K562 (cell line): ENCODE measurements at regions of chr20 and their contacts with region 1.

Region 1: DNA sequence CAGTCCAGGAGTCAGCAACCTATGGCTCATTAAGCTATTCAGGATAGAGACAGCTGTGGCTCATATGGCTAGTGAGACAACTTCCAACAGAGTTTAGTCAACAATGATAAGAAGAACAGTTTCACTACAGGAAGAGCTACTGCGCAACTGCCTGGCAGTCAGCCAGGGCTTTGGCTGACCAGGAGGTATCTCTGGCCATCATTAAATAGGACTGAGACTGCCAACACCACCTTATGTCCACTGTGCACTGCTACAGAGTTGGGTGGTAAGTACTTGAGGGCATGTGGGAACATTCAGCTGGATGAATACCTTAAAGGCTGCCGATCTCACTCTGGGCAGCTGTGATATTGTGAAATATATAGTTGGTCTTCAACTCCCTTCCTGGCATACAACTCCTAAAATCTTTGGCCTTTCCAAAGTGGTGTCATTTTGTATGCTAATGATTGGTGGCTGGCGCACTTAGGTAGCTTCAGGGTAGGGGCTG is 52.2 kb upstream of the FAM83C start:
- DNase-seq: peak; percentile 44 to 93 (median 67)
- ATAC-seq: peak; percentile 95
- H3K4me3 ChIP-seq: no peak overlapping the region
- H3K27ac ChIP-seq: peak overlapping the region; percentile 47; the same call in 2 of the 3 replicates
- H3K4me1 ChIP-seq: peaks cover 0 to 19% of the 10 kb centered on the region in 2 experiments; a peak in 4 of 5 replicates
- H3K27me3 ChIP-seq: no peaks in the 10 kb centered on the region
- CTCF ChIP-seq: no peak
- EP300 ChIP-seq: peak; percentile 66
- POLR2A ChIP-seq: no peak
- RAD21 ChIP-seq: no peak; a peak in 1 of 4 replicates

Region 2: DNA sequence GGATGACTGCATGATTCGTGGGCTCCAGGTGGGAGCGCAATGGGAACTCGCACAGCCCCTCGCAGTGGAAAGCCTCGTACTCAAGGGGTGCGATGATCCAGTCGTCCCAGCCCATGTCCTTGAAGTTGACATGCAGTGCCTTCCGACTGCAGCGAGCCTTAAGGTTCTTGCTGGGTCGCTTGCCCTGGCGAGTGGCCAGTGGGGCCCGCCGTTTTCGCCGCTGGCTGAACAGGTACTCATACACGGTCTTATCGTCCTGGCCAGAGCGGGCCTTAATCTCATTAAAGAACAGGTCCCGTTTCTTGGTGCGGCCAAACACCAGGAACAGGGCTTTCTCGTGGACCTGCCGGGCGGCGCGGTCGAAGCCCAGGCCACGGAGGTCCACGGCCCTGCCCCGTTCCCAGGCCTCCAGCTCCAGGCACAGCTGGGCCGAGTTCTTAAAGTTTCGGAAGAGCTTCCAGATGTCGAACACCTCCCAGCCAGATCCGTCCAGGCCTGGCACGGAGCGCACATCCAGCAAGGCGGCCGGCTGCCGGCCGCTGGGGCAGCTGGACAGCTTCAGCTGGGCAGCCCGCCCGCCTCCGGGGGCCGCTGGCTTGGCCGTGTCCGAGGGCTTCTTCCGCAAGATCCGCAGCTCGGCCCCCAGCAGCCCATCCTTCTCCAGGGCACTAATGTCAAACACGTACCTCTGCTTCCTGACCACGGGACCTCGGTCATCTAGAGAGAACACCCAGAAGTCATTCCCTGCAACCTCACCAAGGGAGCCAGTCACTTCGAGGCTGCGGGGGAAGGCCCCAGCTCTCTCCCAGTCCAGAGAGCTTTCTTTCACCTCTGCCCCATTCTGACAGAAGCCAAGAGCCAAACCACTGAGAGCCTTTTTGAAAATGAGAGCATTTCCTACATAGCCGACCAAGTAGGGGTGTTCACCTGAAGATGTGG is 89.9 kb after region 1 on chr20:
- CTCF ChIA-PET with region 1: interaction called, 3 read pairs
- POLR2A ChIA-PET with region 1: no interaction called
- in situ Hi-C with region 1: no loop called
- intact Hi-C with region 1: loop called (anchors 5 kb)
- DNase-seq: no peak
- ATAC-seq: peak; percentile 16
- H3K4me3 ChIP-seq: no peak overlapping the region
- H3K27ac ChIP-seq: no peak overlapping the region
- H3K4me1 ChIP-seq: peaks cover 5 to 21% of the 10 kb centered on the region in 2 experiments; a peak in 4 of 5 replicates
- H3K27me3 ChIP-seq: no peaks in the 10 kb centered on the region
- CTCF ChIP-seq: no peak
- EP300 ChIP-seq: no peak
- POLR2A ChIP-seq: no peak
- RAD21 ChIP-seq: no peak

Region 3: DNA sequence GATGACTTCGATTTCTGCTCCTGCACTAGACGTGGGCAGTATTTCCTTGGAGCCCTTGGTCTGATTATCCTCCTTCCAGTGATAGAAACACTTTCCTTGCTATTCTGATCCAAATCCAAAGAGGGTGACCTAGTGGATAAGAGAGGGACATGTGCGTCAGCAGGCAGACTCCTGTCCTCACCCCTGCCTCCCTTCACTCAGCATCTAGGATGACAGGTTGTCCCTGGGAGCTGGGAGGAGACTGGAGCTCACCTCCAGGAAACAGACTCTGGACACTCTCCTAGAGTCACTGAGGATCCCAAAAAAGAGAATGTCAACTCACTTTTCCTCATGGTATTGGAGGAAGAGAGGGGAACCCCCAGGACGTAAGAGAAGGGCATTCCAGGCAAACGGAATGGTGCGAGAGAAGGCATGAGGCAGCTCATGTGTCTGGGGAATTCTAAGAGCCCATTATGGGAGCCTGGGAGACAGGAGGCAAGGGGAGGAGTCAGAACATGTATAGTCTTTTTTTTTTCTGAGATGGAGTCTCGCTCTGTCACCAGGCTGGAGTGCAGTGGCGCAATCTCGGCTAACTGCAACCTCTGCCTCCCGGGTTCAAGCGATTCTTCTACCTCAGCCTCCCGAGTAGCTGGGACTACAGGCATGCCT is 182.8 kb after region 1 on chr20:
- CTCF ChIA-PET with region 1: no interaction called
- POLR2A ChIA-PET with region 1: no interaction called
- in situ Hi-C with region 1: no loop called
- intact Hi-C with region 1: no loop called
- DNase-seq: no peak
- ATAC-seq: no peak
- H3K4me3 ChIP-seq: no peak overlapping the region
- H3K27ac ChIP-seq: no peak overlapping the region
- H3K4me1 ChIP-seq: peaks cover 0 to 4% of the 10 kb centered on the region in 2 experiments; a peak in 1 of 5 replicates
- H3K27me3 ChIP-seq: no peaks in the 10 kb centered on the region
- CTCF ChIP-seq: no peak
- EP300 ChIP-seq: no peak
- POLR2A ChIP-seq: no peak
- RAD21 ChIP-seq: no peak